T-cell (primary cell): ENCODE measurements at regions of chr14 and their contacts with region 1.

Region 1: GRCh38 chr14:76962303-76962660 is 66.2 kb downstream of the IRF2BPL start:
- DNase-seq: no peak
- ATAC-seq: peak in 1 of 4 experiments; percentile 4
- H3K4me3 ChIP-seq: peak overlapping the region; percentile 49 to 62
- H3K4me3 Mint-ChIP-seq: peak overlapping the region; percentile 74 to 80 (median 77)
- H3K27ac ChIP-seq: peak overlapping the region; percentile 89
- H3K27ac Mint-ChIP-seq: peak overlapping the region; percentile 97
- H3K4me1 ChIP-seq: peaks cover 54 to 71% of the 10 kb centered on the region in 2 experiments
- H3K4me1 Mint-ChIP-seq: peaks cover 70 to 89% (median 71%) of the 10 kb centered on the region in 3 donors
- H3K27me3 ChIP-seq: no peaks in the 10 kb centered on the region
- H3K27me3 Mint-ChIP-seq: no peaks in the 10 kb centered on the region

Region 2: DNA sequence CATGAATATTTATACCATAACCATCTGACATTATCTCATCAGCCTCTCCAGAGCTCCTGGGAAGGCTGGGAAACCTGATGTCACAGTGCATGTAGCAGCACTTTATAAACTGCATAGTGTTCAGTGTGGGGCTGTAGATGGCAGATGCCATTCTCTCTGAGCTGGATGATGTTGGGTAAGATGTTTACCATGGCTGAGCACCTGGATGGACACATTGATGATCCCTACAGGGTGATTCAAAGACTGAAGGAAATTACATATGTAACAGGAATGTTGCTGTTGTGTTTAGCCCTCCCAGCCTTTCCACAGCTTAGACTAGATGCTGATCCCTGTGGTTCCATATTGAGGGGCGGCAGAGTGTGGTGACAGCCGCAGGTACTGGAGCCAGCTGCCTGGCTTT is 939.3 kb before region 1 on chr14:
- CTCF ChIA-PET with region 1: no interaction called
- POLR2A ChIA-PET with region 1: no interaction called
- DNase-seq: no peak
- ATAC-seq: no peak
- H3K4me3 ChIP-seq: no peak overlapping the region
- H3K4me3 Mint-ChIP-seq: no peak overlapping the region
- H3K27ac ChIP-seq: no peak overlapping the region
- H3K27ac Mint-ChIP-seq: no peak overlapping the region
- H3K4me1 ChIP-seq: no peaks in the 10 kb centered on the region
- H3K4me1 Mint-ChIP-seq: no peaks in the 10 kb centered on the region
- H3K27me3 ChIP-seq: no peaks in the 10 kb centered on the region
- H3K27me3 Mint-ChIP-seq: no peaks in the 10 kb centered on the region

Region 3: DNA sequence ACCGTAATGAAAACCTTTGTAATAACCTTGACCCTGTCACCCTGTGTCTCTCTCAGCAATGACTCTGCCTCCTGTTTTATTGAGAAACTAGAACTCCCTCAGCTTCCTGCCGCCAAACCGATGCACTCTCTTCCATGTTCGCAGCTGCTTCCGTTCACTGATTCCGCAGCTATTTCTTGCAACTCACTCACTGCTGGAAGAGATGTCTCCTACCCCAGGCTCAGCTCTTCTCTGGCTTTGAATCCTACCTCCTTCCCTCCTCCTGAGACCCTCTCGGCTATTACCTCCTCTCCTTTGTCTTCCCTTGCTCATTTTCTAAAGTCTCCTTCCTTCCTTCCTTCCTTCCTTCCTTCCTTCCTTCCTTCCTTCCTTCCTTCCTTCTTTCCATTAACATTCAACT is 515.4 kb before region 1 on chr14:
- CTCF ChIA-PET with region 1: no interaction called
- POLR2A ChIA-PET with region 1: no interaction called
- DNase-seq: no peak
- ATAC-seq: no peak
- H3K4me3 ChIP-seq: no peak overlapping the region
- H3K4me3 Mint-ChIP-seq: no peak overlapping the region
- H3K27ac ChIP-seq: no peak overlapping the region
- H3K27ac Mint-ChIP-seq: no peak overlapping the region
- H3K4me1 ChIP-seq: no peaks in the 10 kb centered on the region
- H3K4me1 Mint-ChIP-seq: no peaks in the 10 kb centered on the region
- H3K27me3 ChIP-seq: peaks cover 0 to 11% of the 10 kb centered on the region in 2 experiments
- H3K27me3 Mint-ChIP-seq: peaks cover 14 to 15% of the 10 kb centered on the region in 2 donors

Region 4: GRCh38 chr14:76742966-76743365 is 219.3 kb before region 1 on chr14:
- CTCF ChIA-PET with region 1: no interaction called
- POLR2A ChIA-PET with region 1: no interaction called
- DNase-seq: no peak
- ATAC-seq: no peak
- H3K4me3 ChIP-seq: no peak overlapping the region
- H3K4me3 Mint-ChIP-seq: no peak overlapping the region
- H3K27ac ChIP-seq: no peak overlapping the region
- H3K27ac Mint-ChIP-seq: no peak overlapping the region
- H3K4me1 ChIP-seq: no peaks in the 10 kb centered on the region
- H3K4me1 Mint-ChIP-seq: peaks cover 0 to 3% (median 0%) of the 10 kb centered on the region in 3 donors
- H3K27me3 ChIP-seq: peaks cover 0 to 16% of the 10 kb centered on the region in 2 experiments
- H3K27me3 Mint-ChIP-seq: peaks cover 22 to 27% of the 10 kb centered on the region in 2 donors

Region 5: GRCh38 chr14:76829650-76830421 is 132.4 kb before region 1 on chr14:
- CTCF ChIA-PET with region 1: no interaction called
- POLR2A ChIA-PET with region 1: no interaction called
- DNase-seq: no peak
- ATAC-seq: no peak
- H3K4me3 ChIP-seq: no peak overlapping the region
- H3K4me3 Mint-ChIP-seq: no peak overlapping the region
- H3K27ac ChIP-seq: no peak overlapping the region
- H3K27ac Mint-ChIP-seq: no peak overlapping the region
- H3K4me1 ChIP-seq: no peaks in the 10 kb centered on the region
- H3K4me1 Mint-ChIP-seq: no peaks in the 10 kb centered on the region
- H3K27me3 ChIP-seq: peaks cover 0 to 6% of the 10 kb centered on the region in 2 experiments
- H3K27me3 Mint-ChIP-seq: peaks cover 4 to 7% of the 10 kb centered on the region in 2 donors

Region 6: DNA sequence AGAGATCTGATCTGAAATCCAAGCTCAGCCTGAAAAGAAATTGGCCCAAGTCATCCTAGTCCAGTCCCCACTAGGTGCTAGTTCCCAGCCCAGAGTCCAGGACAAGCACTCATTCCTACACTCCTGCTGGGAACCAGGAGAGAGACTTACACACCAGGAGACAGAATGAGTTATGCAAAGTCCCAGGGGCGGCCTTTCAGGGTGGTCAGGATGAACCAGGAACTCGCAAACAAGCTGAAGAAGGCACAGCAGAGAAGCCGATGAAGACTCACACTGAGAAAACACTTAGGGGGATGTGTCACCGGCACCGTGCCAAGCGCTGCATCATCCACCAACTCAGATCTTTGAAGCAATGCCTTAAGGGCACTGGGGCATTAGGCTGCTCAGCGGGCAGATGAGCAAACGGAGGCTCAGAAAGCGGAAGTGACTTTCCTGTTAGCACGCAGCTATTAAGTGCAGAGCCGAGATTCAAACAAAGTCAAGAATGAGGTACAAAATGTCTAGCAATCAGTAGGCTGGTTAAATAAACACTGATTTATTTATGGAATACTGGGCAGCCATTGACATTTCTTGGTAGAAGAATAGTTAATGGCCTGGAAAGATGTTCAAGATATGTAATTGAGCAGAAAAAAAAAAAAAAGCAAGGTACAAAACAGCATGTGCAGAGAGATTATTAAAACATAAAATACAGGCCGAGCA is 57.4 kb before region 1 on chr14:
- CTCF ChIA-PET with region 1: interaction called in 1 of 2 experiments, 4 read pairs
- POLR2A ChIA-PET with region 1: interaction called, 7 to 13 read pairs
- DNase-seq: peak; percentile 42 to 81 (median 67)
- ATAC-seq: peak; percentile 84 to 91 (median 87)
- H3K4me3 ChIP-seq: no peak overlapping the region
- H3K4me3 Mint-ChIP-seq: peak overlapping the region; percentile 3 to 68 (median 34)
- H3K27ac ChIP-seq: no peak overlapping the region
- H3K27ac Mint-ChIP-seq: peak overlapping the region; percentile 84 to 91
- H3K4me1 ChIP-seq: peaks cover 4 to 26% of the 10 kb centered on the region in 2 experiments
- H3K4me1 Mint-ChIP-seq: peaks cover 25 to 40% (median 28%) of the 10 kb centered on the region in 3 donors
- H3K27me3 ChIP-seq: peaks cover 0 to 4% of the 10 kb centered on the region in 2 experiments
- H3K27me3 Mint-ChIP-seq: no peaks in the 10 kb centered on the region

Region 7: DNA sequence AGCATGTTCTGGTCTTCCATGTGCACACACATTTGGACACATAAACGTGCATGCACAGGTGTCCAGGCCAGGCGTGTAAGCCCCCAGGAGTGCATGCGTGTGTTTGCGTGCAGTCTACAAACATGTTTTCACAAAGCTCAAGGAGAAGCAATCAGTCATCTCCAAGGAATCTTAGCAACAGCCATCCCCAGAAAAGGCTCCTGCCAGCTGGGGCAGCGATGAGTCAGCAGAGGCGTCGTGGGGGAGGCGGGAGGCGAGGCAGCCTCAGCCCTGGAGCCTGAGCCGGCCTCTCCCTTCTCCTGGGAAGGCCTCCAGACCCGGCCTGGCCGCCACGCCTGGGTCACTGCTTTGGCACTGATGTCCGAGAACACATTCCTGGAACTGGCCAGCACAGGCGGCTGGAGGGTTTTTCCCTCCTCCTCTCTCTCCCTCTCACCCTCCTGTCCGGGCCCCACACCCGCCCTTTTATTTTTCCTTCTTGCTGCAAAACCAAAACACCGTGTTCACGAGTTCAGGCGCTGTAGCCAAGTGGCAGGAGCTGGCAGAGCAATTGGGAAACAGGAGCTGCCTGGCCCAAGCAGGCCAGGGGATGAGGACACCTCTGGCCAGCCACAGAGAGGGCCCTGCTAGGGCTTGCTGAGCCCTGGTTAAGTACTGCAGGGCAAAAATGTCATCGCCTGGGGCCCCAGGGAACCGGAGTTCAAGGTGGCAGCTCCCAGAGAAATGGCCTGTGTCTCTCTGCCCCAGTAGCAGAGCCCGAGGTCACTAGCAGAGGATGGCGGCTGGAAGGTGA is 43.3 kb before region 1 on chr14:
- CTCF ChIA-PET with region 1: interaction called, 14 to 15 read pairs
- POLR2A ChIA-PET with region 1: interaction called in 1 of 2 experiments, 3 read pairs
- DNase-seq: no peak
- ATAC-seq: no peak
- H3K4me3 ChIP-seq: no peak overlapping the region
- H3K4me3 Mint-ChIP-seq: peak overlapping the region in 1 of 3 donors; percentile 52
- H3K27ac ChIP-seq: no peak overlapping the region
- H3K27ac Mint-ChIP-seq: peak overlapping the region in 1 of 2 donors; percentile 11
- H3K4me1 ChIP-seq: peaks cover 15 to 57% of the 10 kb centered on the region in 2 experiments
- H3K4me1 Mint-ChIP-seq: peaks cover 43 to 56% (median 49%) of the 10 kb centered on the region in 3 donors
- H3K27me3 ChIP-seq: no peaks in the 10 kb centered on the region
- H3K27me3 Mint-ChIP-seq: no peaks in the 10 kb centered on the region

Region 8: DNA sequence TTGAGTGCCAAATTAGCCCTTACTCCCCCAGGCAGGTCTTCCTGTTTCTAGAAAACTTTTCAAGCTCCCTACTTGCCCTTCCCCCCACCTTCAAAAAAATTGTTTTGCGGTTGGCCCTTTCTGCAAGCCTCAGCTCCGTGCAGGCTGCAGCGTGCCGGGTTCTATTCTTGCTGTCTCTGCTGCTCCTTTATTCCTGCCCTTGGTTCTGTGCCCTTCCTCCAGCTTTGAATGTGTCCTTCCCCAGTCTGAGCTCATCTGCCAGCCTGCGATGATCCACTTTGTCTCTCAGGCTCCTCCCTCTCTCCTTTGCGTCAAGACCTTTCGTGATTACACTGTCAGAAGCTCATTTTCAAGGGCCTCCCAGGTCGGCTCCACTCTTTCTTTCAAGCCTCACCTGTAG is 32.4 kb before region 1 on chr14:
- CTCF ChIA-PET with region 1: interaction called, 3 to 15 read pairs
- POLR2A ChIA-PET with region 1: interaction called, 6 to 21 read pairs
- DNase-seq: peak in 34 of 35 experiments; percentile 46 to 88 (median 65)
- ATAC-seq: peak; percentile 59 to 84 (median 66)
- H3K4me3 ChIP-seq: peak overlapping the region; percentile 11 to 24
- H3K4me3 Mint-ChIP-seq: peak overlapping the region; percentile 56 to 70 (median 61)
- H3K27ac ChIP-seq: peak overlapping the region; percentile 48
- H3K27ac Mint-ChIP-seq: peak overlapping the region; percentile 76 to 88
- H3K4me1 ChIP-seq: peaks cover 36 to 80% of the 10 kb centered on the region in 2 experiments
- H3K4me1 Mint-ChIP-seq: peaks cover 82 to 94% (median 88%) of the 10 kb centered on the region in 3 donors
- H3K27me3 ChIP-seq: no peaks in the 10 kb centered on the region
- H3K27me3 Mint-ChIP-seq: no peaks in the 10 kb centered on the region

Region 9: DNA sequence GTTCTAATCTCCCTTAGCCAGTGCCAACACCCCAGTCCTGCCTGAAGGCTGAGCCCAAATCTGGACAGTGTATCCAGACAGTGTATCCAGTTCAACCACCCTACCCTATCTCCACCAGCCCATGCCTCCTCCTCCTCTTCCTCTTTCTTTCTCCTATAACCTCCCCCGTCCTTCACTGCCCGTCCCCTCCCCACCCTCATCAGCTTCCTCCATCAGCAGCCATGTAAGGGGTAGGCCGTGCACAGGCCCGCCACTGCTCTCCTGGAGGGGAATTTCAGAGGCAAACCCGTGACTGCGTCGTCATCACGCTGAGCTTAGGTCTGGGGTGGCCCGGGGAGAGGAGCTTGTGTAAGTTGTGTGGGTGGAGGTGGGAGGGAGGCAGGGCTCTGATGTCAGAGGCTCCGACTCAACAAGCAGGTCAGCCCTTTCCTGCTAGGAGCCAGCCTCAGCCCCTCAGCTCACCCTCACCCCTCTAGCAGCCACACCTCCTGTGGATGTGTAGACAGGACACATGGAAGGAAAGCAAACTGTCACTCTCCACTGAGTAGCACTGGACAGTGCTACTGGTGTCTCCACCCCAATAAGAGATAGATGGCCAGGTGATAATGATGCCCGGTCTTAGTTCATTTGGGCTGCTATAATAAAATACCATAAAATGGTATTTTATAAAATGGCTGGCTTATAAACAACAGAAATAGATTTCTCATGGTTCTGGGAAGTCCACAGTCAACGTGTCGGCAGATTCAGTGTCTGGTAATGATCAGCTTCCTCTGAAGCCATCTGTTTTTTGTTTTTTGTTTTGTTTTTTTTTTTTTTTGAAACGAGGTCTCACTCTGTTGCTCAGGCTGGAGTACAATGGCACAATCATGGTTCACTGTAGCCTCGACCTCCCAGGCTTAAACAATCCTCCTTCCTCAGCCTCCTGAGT is 15.8 kb after region 1 on chr14:
- CTCF ChIA-PET with region 1: interaction called, 7 to 19 read pairs
- POLR2A ChIA-PET with region 1: interaction called in 1 of 2 experiments, 8 read pairs
- DNase-seq: peak in 34 of 35 experiments; percentile 44 to 91 (median 80)
- ATAC-seq: peak; percentile 83 to 98 (median 87)
- H3K4me3 ChIP-seq: no peak overlapping the region
- H3K4me3 Mint-ChIP-seq: peak overlapping the region in 1 of 3 donors; percentile 22
- H3K27ac ChIP-seq: peak overlapping the region; percentile 60
- H3K27ac Mint-ChIP-seq: peak overlapping the region; percentile 72 to 76
- H3K4me1 ChIP-seq: peaks cover 3 to 22% of the 10 kb centered on the region in 2 experiments
- H3K4me1 Mint-ChIP-seq: peaks cover 15 to 21% (median 19%) of the 10 kb centered on the region in 3 donors
- H3K27me3 ChIP-seq: no peaks in the 10 kb centered on the region
- H3K27me3 Mint-ChIP-seq: no peaks in the 10 kb centered on the region

Region 10: GRCh38 chr14:77023001-77023996 is 61.0 kb after region 1 on chr14:
- CTCF ChIA-PET with region 1: interaction called, 6 to 15 read pairs
- POLR2A ChIA-PET with region 1: interaction called in 1 of 2 experiments, 10 read pairs
- DNase-seq: no peak
- ATAC-seq: no peak
- H3K4me3 ChIP-seq: no peak overlapping the region
- H3K4me3 Mint-ChIP-seq: peak overlapping the region in 2 of 3 donors; percentile 25 to 76
- H3K27ac ChIP-seq: peak overlapping the region; percentile 47
- H3K27ac Mint-ChIP-seq: peak overlapping the region; percentile 84 to 85
- H3K4me1 ChIP-seq: peaks cover 15 to 51% of the 10 kb centered on the region in 2 experiments
- H3K4me1 Mint-ChIP-seq: peaks cover 30 to 46% (median 38%) of the 10 kb centered on the region in 3 donors
- H3K27me3 ChIP-seq: no peaks in the 10 kb centered on the region
- H3K27me3 Mint-ChIP-seq: no peaks in the 10 kb centered on the region

Region 11: GRCh38 chr14:77040059-77040740 is 77.9 kb after region 1 on chr14:
- CTCF ChIA-PET with region 1: interaction called in 1 of 2 experiments, 29 read pairs
- POLR2A ChIA-PET with region 1: interaction called, 4 to 6 read pairs
- DNase-seq: peak; percentile 95 to 99 (median 98)
- ATAC-seq: peak; percentile 80 to 86 (median 82)
- H3K4me3 ChIP-seq: peak overlapping the region; percentile 39 to 44
- H3K4me3 Mint-ChIP-seq: peak overlapping the region; percentile 79 to 83 (median 81)
- H3K27ac ChIP-seq: peak overlapping the region; percentile 95
- H3K27ac Mint-ChIP-seq: peak overlapping the region; percentile 97 to 99
- H3K4me1 ChIP-seq: peaks cover 46 to 84% of the 10 kb centered on the region in 2 experiments
- H3K4me1 Mint-ChIP-seq: peaks cover 86 to 94% (median 86%) of the 10 kb centered on the region in 3 donors
- H3K27me3 ChIP-seq: no peaks in the 10 kb centered on the region
- H3K27me3 Mint-ChIP-seq: no peaks in the 10 kb centered on the region